Adrenal gland (tissue), 19 donors: ENCODE measurements at regions of chr3 and their contacts with region 1.

Region 1: GRCh38 chr3:142356818-142357217 is 91.0 kb downstream of the XRN1 start:
- DNase-seq: no peak
- H3K4me3 ChIP-seq: no peak overlapping the region
- H3K27ac ChIP-seq: no peak overlapping the region
- H3K4me1 ChIP-seq: no peaks in the 10 kb centered on the region
- H3K27me3 ChIP-seq: no peaks in the 10 kb centered on the region
- CTCF ChIP-seq: no peak
- POLR2A ChIP-seq: no peak

Region 2: GRCh38 chr3:142394921-142395622 is 38.3 kb after region 1 on chr3:
- intact Hi-C with region 1: loop called in 1 of 2 experiments (anchors 10 kb)
- DNase-seq: no peak
- H3K4me3 ChIP-seq: no peak overlapping the region
- H3K27ac ChIP-seq: no peak overlapping the region
- H3K4me1 ChIP-seq: no peaks in the 10 kb centered on the region
- H3K27me3 ChIP-seq: no peaks in the 10 kb centered on the region
- CTCF ChIP-seq: no peak
- POLR2A ChIP-seq: no peak